ENCODE measurements at regions of chr14 and their contacts with region 1.

Region 1: DNA sequence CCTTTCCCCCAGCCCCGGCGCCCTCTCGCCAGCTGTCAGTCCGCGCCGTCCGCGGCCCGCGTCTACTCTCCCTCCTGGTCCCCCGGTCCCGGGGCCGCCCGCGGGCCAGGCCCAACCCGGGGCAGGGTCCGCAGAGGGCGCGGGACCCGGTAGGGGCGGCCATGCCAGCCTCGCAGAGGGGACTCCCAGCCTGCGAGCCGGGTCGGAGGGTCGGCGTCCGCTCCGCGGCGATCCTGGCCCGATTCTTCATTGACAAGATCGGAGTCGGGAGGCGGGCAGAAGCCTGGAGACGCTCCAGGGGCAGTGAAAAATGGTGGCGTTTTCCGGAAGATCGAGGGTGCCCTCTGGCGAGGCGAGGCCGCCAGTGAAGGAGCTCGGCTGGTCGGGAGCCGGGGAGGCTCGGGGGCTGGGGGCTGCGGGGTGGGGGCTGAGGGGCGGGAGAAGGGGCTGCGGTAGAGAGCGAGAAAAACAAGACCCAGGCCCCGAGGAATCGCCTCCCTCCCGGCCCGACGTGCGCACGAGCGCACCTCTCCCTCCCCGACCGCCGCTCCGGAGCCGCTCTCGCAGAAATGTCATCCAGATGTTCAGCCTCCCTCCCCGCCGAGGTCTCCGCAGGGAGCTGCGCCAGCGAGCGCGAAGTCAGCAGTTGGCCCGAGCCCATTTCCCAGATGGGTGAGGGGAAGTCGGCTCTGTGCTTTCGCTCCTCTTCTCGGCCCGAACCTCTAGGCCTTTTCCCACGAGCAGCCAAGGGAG is 647 bp upstream of the TGFB3 start:
- DNase-seq: peak; percentile 85 to 93 (median 90)
- H3K4me3 ChIP-seq: peak overlapping the region; percentile 86
- H3K27ac ChIP-seq: peak overlapping the region; percentile 95 to 98
- H3K4me1 ChIP-seq: peaks cover 12% of the 10 kb centered on the region
- H3K27me3 ChIP-seq: no peaks in the 10 kb centered on the region
- CTCF ChIP-seq: peak; percentile 23 to 41 (median 24)
- EP300 ChIP-seq: no peak
- POLR2A ChIP-seq: peak; percentile 15

Region 2: DNA sequence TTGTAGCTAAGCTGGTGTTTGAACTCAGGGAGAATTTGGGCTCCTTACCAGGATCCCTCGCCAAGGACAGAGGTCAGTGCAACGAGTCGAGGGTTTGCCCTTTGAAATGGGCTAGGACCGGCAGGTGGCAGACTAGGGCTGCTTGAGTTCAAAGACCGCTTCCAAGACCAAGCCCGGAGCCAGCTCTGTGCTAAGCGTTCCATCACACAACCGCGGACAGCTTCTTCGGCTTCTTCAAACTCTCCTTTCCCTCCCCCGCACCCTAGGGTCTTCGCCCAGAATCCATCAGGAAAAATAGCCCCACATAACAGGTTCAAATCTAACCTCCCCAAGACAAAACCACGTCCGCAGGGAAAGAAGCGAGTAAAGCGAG is 404.7 kb before region 1 on chr14:
- intact Hi-C with region 1: loop called in 2 of 4 experiments (anchors 5 kb)
- DNase-seq: peak; percentile 82 to 90 (median 85)
- H3K4me3 ChIP-seq: peak overlapping the region; percentile 65
- H3K27ac ChIP-seq: peak overlapping the region in 1 of 2 donors; percentile 57
- H3K4me1 ChIP-seq: peaks cover 14% of the 10 kb centered on the region
- H3K27me3 ChIP-seq: no peaks in the 10 kb centered on the region
- CTCF ChIP-seq: peak; percentile 59 to 73 (median 65)
- EP300 ChIP-seq: no peak
- POLR2A ChIP-seq: no peak

Region 3: DNA sequence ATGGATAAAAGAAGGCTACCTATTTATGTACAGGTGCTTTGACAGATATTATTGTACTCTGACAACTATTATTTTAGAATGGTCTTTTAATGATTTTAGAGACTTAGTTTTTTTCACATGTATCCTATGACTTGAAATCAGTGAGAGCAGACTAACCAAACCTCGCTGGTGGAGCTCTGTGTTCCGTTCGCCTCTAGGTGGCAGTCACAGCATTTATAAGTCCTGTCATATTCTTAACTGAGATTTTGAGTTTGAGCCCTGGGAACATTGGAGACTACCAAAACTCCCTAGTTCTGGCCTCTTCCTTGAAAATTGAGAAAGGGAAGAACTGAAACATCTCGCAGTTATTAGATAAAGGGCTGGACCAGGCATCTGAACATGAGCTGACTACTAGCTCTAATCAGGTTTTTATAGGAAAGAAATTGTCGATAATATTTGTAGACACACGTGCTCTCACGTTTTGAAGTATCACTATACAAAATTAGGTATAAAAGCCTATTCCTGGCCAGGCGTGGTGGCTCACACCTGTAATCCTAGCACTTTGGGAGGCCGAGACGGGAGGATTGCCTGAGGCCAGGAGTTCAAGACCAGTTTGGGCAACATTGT is 273.1 kb before region 1 on chr14:
- intact Hi-C with region 1: loop called (anchors 2 to 5 kb)
- DNase-seq: peak; percentile 74 to 84 (median 78)
- H3K4me3 ChIP-seq: no peak overlapping the region
- H3K27ac ChIP-seq: no peak overlapping the region
- H3K4me1 ChIP-seq: no peaks in the 10 kb centered on the region
- H3K27me3 ChIP-seq: no peaks in the 10 kb centered on the region
- CTCF ChIP-seq: peak; percentile 52 to 67 (median 65)
- EP300 ChIP-seq: no peak
- POLR2A ChIP-seq: no peak

Region 4: GRCh38 chr14:75794615-75795038 is 187.8 kb before region 1 on chr14:
- intact Hi-C with region 1: loop called in 1 of 4 experiments (anchors 10 kb)
- DNase-seq: no peak
- H3K4me3 ChIP-seq: no peak overlapping the region
- H3K27ac ChIP-seq: no peak overlapping the region
- H3K4me1 ChIP-seq: no peaks in the 10 kb centered on the region
- H3K27me3 ChIP-seq: no peaks in the 10 kb centered on the region
- CTCF ChIP-seq: peak in 1 of 3 donors; percentile 19
- EP300 ChIP-seq: no peak
- POLR2A ChIP-seq: no peak

Region 5: GRCh38 chr14:75906676-75907280 is 75.7 kb before region 1 on chr14:
- intact Hi-C with region 1: loop called in 3 of 4 experiments (anchors 2 to 5 kb)
- DNase-seq: peak; percentile 45 to 78 (median 50)
- H3K4me3 ChIP-seq: no peak overlapping the region
- H3K27ac ChIP-seq: no peak overlapping the region
- H3K4me1 ChIP-seq: peaks cover 4% of the 10 kb centered on the region
- H3K27me3 ChIP-seq: no peaks in the 10 kb centered on the region
- CTCF ChIP-seq: peak; percentile 68 to 72 (median 70)
- EP300 ChIP-seq: no peak
- POLR2A ChIP-seq: no peak

Region 6: DNA sequence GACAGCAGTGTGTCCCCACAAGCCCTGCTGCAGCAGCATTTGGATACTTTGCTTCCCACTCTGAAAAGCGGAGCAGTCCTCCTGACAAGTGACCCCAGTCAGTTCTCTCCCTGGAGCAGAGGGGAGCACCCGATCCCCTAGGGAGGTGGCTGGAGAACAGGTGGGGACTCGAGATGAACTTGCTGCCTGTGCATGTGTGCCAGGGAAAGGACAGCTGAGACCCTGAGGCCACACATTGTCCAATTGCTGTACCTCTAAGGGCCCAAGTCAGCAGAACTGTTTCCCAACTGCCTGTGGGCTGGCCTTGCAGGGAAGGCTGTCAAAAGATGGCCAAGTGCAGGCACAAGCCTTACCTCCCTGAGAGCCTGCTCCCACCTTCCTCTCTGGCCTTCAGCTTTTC is 58.3 kb after region 1 on chr14:
- intact Hi-C with region 1: no loop called
- DNase-seq: no peak
- H3K4me3 ChIP-seq: no peak overlapping the region
- H3K27ac ChIP-seq: no peak overlapping the region
- H3K4me1 ChIP-seq: no peaks in the 10 kb centered on the region
- H3K27me3 ChIP-seq: no peaks in the 10 kb centered on the region
- CTCF ChIP-seq: no peak
- EP300 ChIP-seq: no peak
- POLR2A ChIP-seq: no peak

Measured in ovary (tissue), 10 donors.